ENCODE measurements at regions of chr11 and their contacts with region 1.

Region 1: GRCh38 chr11:11798586-11799438 is 43.0 kb upstream of the USP47 start:
- DNase-seq: peak; percentile 83
- H3K4me3 Mint-ChIP-seq: no peak overlapping the region
- H3K27ac Mint-ChIP-seq: no peak overlapping the region
- H3K4me1 Mint-ChIP-seq: no peaks in the 10 kb centered on the region
- H3K27me3 Mint-ChIP-seq: peaks cover 28% of the 10 kb centered on the region
- CTCF ChIP-seq: peak; percentile 79

Region 2: GRCh38 chr11:11374358-11375148 is 424.3 kb before region 1 on chr11:
- CTCF ChIA-PET with region 1: no interaction called
- POLR2A ChIA-PET with region 1: no interaction called
- intact Hi-C with region 1: no loop called
- DNase-seq: no peak
- H3K4me3 Mint-ChIP-seq: no peak overlapping the region
- H3K27ac Mint-ChIP-seq: no peak overlapping the region
- H3K4me1 Mint-ChIP-seq: no peaks in the 10 kb centered on the region
- H3K27me3 Mint-ChIP-seq: no peaks in the 10 kb centered on the region
- CTCF ChIP-seq: no peak

Region 3: GRCh38 chr11:11848891-11849746 is 50.3 kb after region 1 on chr11:
- CTCF ChIA-PET with region 1: interaction called, 43 read pairs
- POLR2A ChIA-PET with region 1: no interaction called
- intact Hi-C with region 1: loop called (anchors 1 kb)
- DNase-seq: peak; percentile 84
- H3K4me3 Mint-ChIP-seq: no peak overlapping the region
- H3K27ac Mint-ChIP-seq: peak overlapping the region; percentile 57
- H3K4me1 Mint-ChIP-seq: peaks cover 44% of the 10 kb centered on the region
- H3K27me3 Mint-ChIP-seq: no peaks in the 10 kb centered on the region
- CTCF ChIP-seq: peak; percentile 73

Region 4: DNA sequence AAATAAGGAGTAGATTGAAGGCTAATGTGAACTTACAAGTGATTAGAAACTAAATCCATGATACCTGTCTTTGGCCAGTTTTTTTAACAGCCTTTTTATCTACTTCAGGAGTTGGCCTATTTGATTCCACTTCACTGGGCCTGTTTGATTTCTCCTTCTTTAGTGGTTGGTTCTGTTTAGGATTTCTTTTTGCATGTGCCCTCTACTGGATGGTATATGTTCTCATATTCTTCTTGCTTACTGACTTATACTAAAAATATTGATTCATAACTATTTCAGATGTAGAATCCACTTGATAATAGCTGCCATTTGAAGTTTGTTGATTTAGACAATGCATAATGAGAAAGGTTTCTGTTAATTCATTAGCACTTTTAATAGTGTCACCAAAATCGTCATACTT is 96.9 kb after region 1 on chr11:
- CTCF ChIA-PET with region 1: interaction called, 23 read pairs
- POLR2A ChIA-PET with region 1: no interaction called
- intact Hi-C with region 1: loop called (anchors 1 kb)
- DNase-seq: no peak
- H3K4me3 Mint-ChIP-seq: no peak overlapping the region
- H3K27ac Mint-ChIP-seq: no peak overlapping the region
- H3K4me1 Mint-ChIP-seq: peaks cover 7% of the 10 kb centered on the region
- H3K27me3 Mint-ChIP-seq: no peaks in the 10 kb centered on the region
- CTCF ChIP-seq: peak; percentile 3

Region 5: DNA sequence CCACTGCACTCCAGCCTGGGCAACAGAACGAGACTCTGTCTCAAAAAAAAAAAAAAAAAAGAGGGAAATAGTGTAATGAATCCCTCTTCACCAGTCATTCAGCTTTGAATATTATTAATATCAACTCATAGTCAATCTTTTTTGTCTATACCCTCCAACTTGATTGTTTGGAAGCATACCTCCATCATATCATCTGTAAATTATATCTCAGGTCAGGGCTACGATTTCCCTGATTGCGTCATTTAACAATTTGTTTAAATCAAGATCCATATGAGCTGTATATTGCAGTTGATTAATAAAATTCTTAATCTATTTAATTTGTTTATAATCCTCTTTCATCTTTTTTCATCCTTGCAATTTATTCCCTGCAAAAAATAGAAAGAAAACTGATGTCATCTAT is 103.1 kb after region 1 on chr11:
- CTCF ChIA-PET with region 1: interaction called, 23 read pairs
- POLR2A ChIA-PET with region 1: interaction called, 3 read pairs
- intact Hi-C with region 1: no loop called
- DNase-seq: no peak
- H3K4me3 Mint-ChIP-seq: no peak overlapping the region
- H3K27ac Mint-ChIP-seq: no peak overlapping the region
- H3K4me1 Mint-ChIP-seq: peaks cover 7% of the 10 kb centered on the region
- H3K27me3 Mint-ChIP-seq: no peaks in the 10 kb centered on the region
- CTCF ChIP-seq: no peak

Region 6: DNA sequence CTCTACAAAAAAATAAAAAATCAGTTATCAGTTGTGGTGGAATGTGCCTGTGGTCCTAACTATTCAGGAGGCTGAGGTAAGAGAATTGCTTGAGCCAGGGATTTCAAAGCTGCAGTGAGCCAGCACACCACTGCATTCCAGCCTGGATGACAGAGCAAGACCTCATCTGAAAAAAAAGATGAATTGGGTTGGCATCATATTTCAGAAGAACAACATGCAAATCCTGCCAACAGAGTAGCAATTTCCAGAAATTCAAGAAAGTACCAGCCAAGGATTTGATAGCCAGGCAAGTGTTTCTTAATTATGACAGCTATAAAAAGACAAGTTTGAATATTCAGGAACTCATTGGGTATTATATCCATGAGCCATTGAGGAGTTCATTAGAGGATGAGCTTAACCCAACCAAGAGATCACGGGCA is 118.2 kb after region 1 on chr11:
- CTCF ChIA-PET with region 1: no interaction called
- POLR2A ChIA-PET with region 1: no interaction called
- intact Hi-C with region 1: loop called (anchors 5 kb)
- DNase-seq: peak; percentile 49
- H3K4me3 Mint-ChIP-seq: no peak overlapping the region
- H3K27ac Mint-ChIP-seq: peak overlapping the region; percentile 84
- H3K4me1 Mint-ChIP-seq: peaks cover 19% of the 10 kb centered on the region
- H3K27me3 Mint-ChIP-seq: no peaks in the 10 kb centered on the region
- CTCF ChIP-seq: no peak

Measured in MCF 10A (cell line).